ENCODE measurements at regions of chr10 and their contacts with region 1.

Region 1: GRCh38 chr10:61882621-61883373 is 18.7 kb upstream of the ARID5B start:
- DNase-seq: no peak
- H3K4me3 Mint-ChIP-seq: no peak overlapping the region
- H3K27ac Mint-ChIP-seq: peak overlapping the region; percentile 81
- H3K4me1 Mint-ChIP-seq: peaks cover 16% of the 10 kb centered on the region
- H3K27me3 Mint-ChIP-seq: peaks cover 5% of the 10 kb centered on the region

Region 2: GRCh38 chr10:61822781-61823230 is 60.0 kb before region 1 on chr10:
- intact Hi-C with region 1: loop called (anchors 5 kb)
- DNase-seq: no peak
- H3K4me3 Mint-ChIP-seq: no peak overlapping the region
- H3K27ac Mint-ChIP-seq: no peak overlapping the region
- H3K4me1 Mint-ChIP-seq: peaks cover 18% of the 10 kb centered on the region
- H3K27me3 Mint-ChIP-seq: no peaks in the 10 kb centered on the region

Region 3: GRCh38 chr10:61842755-61843497 is 39.9 kb before region 1 on chr10:
- intact Hi-C with region 1: no loop called
- DNase-seq: no peak
- H3K4me3 Mint-ChIP-seq: no peak overlapping the region
- H3K27ac Mint-ChIP-seq: no peak overlapping the region
- H3K4me1 Mint-ChIP-seq: peaks cover 9% of the 10 kb centered on the region
- H3K27me3 Mint-ChIP-seq: no peaks in the 10 kb centered on the region

Region 4: GRCh38 chr10:61896854-61897661 is 14.3 kb after region 1 on chr10:
- intact Hi-C with region 1: loop called (anchors 1 kb)
- DNase-seq: peak; percentile 56
- H3K4me3 Mint-ChIP-seq: peak overlapping the region; percentile 73
- H3K27ac Mint-ChIP-seq: peak overlapping the region; percentile 83
- H3K4me1 Mint-ChIP-seq: peaks cover 42% of the 10 kb centered on the region
- H3K27me3 Mint-ChIP-seq: no peaks in the 10 kb centered on the region

Region 5: GRCh38 chr10:62199584-62199983 is 316.8 kb after region 1 on chr10:
- intact Hi-C with region 1: no loop called
- DNase-seq: no peak
- H3K4me3 Mint-ChIP-seq: no peak overlapping the region
- H3K27ac Mint-ChIP-seq: peak overlapping the region; percentile 14
- H3K4me1 Mint-ChIP-seq: peaks cover 26% of the 10 kb centered on the region
- H3K27me3 Mint-ChIP-seq: no peaks in the 10 kb centered on the region

Measured in activated T-helper 2 cell treated with anti-CD3 and anti-CD28 coated beads, Interferon-gamma antibody, Interleukin-2, Interleukin-4, amounts not matched to agents 10 μg/mL and 5 μg/mL and 100 μg/mL, durations not matched to agents 14 hours and 24 hours and 36 hours (primary cell).